ENCODE measurements at regions of chr9 and their contacts with region 1.

Region 1: DNA sequence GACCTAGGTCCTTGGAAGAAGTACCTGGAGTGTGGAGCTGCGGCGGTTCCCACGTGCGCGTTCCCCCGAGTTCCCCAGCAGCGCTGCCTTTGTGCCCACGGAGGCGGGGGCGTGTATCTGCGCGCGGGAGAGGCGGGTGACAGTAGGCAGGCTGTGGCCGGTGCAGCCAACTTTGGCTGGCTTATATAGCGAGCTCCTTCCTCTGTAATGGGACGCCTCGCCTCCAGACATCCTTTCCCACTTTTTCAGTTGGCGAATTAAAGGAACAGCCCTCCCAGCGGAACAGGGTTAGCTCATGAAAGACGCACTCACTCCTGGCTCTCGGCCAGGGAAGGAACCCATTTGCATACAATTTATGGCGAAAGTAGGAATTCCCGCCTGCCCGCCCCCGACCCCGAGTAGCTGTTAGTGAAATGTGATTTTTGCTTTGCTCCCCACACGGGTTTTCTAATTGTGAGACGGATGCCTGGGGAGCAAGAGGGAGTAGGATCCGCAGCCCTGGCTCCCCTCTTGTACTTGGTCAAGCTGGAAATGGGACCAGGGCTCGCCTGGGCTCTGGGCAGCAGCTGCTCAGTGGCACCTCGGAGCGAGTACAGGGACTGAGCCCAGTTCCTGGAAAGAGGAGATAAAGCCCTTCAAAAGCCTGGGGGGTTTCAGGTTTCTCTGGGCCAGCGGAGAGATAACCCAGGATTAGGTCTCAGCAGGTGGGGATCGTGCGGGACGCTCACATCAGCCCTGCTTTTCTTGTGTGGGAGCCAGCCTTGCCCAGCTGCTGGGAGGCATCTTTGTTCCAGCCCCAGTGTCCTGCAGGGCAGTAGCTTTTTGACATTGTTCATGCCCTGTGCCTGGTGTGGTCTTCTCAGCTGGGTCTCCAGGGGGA is at the start of gene TNC:
- DNase-seq: no peak
- H3K4me3 ChIP-seq: peak within 1 kb of the TSS; percentile 79
- CTCF ChIP-seq: no peak

Region 2: DNA sequence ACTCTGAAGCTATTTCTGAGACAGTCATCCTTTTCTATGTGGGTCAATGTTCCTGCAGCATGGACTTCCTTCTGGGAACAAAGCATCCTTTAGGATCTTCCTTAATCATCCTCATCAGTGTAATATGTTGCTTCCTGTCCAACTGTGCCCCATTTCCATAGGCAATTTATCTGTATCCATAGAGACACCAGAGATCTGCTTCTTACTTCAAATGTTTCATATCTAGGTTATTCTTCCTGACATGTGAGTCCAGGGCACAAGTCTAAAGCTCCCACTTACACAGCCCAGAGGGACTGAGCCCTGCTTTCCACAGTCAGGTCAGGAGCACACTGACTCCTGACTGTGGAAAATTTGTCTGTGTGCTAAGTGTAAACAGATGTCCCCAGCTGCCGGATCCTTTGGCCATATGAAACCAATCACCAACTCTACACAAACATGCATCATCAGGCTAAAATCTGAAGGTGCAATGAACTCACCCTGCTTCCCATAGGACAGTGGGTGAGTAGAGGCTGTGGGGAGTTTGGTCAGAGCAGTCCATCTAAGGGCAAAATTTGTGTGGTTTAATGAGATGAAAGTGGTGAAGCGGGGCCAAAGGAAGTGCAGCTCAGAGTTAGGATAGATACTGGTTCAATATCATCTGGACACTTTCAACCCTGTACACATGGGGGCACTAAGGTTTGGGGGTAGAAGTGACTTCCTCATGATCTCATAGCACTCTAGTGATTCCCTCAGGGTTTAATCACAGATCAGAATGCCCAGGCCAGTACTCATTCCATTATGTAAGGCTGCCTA is 84.9 kb after region 1 on chr9:
- CTCF ChIA-PET with region 1: interaction called, 5 read pairs
- POLR2A ChIA-PET with region 1: interaction called, 17 read pairs
- DNase-seq: peak; percentile 90
- H3K4me3 ChIP-seq: no peak overlapping the region
- CTCF ChIP-seq: peak; percentile 30

Region 3: GRCh38 chr9:115211413-115212124 is 93.3 kb after region 1 on chr9:
- CTCF ChIA-PET with region 1: no interaction called
- POLR2A ChIA-PET with region 1: interaction called, 11 read pairs
- DNase-seq: no peak
- H3K4me3 ChIP-seq: no peak overlapping the region
- CTCF ChIP-seq: no peak

Region 4: GRCh38 chr9:115411993-115412452 is 293.8 kb after region 1 on chr9:
- CTCF ChIA-PET with region 1: no interaction called
- POLR2A ChIA-PET with region 1: no interaction called
- DNase-seq: peak; percentile 77
- H3K4me3 ChIP-seq: no peak overlapping the region
- CTCF ChIP-seq: no peak